ENCODE measurements at regions of chrX and their contacts with region 1.

Region 1: DNA sequence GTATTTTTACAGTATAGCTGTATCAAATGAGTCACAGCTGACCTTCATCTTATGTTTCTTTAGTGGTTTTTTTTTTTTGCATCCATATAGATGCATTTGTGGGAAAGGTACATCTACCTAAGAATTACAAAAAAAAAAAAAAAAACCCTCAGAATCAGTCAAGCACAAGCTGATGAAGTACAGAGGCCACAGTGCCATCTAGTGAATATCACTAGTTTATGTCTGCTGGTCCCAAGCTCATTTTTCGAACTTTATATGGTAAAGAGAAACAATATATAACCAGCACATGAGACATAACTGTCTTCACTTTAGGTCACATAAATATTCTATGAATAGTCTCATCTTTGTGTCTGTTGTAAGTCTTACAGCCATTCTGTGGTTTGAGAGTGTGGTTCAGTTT is 220.1 kb downstream of the DLG3 start:
- DNase-seq: no peak
- H3K4me3 ChIP-seq: no peak overlapping the region
- H3K27ac ChIP-seq: no peak overlapping the region
- H3K27me3 ChIP-seq: no peaks in the 10 kb centered on the region
- CTCF ChIP-seq: peak; percentile 44

Region 2: DNA sequence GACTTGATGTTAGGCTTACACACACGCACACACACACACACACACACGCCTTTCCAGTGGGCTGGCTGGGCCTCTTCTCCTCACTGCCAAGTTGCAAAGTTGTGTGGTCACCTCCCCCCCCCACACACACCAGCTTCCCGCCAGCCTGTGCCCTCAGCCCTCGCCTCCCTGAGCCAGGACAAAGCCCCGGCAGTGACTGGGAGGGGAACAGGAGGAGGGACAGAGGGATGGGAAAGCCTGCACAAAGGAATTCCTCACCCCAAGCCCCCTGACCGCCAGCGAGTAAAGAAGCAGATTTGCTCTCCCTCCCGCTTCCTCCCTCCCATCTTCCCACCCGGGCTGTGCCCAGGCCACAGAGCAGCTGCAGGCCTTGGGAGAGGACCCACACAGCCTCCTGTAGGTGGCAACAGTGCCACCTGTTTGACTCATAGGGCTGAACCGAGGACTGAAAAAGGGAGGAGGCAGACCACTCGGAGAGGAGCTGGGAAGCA is 241.8 kb before region 1 on chrX and contains the start of gene GDPD2:
- CTCF ChIA-PET with region 1: interaction called, 10 read pairs
- POLR2A ChIA-PET with region 1: no interaction called
- DNase-seq: no peak
- H3K4me3 ChIP-seq: no peak within 1 kb of the TSS
- H3K27ac ChIP-seq: no peak within 1 kb of the TSS
- H3K27me3 ChIP-seq: no peaks in the 10 kb centered on the region
- CTCF ChIP-seq: peak; percentile 27; the same call in 1 of the 2 replicates
- polyA plus RNA-seq, gene GDPD2: not detected in 2 replicates

Region 3: GRCh38 chrX:70454441-70455365 is 210.0 kb before region 1 on chrX:
- CTCF ChIA-PET with region 1: interaction called, 18 read pairs
- POLR2A ChIA-PET with region 1: no interaction called
- DNase-seq: no peak
- H3K4me3 ChIP-seq: peak overlapping the region; percentile 68
- H3K27ac ChIP-seq: peak overlapping the region; percentile 39
- H3K27me3 ChIP-seq: no peaks in the 10 kb centered on the region
- CTCF ChIP-seq: peak; percentile 88

Region 4: DNA sequence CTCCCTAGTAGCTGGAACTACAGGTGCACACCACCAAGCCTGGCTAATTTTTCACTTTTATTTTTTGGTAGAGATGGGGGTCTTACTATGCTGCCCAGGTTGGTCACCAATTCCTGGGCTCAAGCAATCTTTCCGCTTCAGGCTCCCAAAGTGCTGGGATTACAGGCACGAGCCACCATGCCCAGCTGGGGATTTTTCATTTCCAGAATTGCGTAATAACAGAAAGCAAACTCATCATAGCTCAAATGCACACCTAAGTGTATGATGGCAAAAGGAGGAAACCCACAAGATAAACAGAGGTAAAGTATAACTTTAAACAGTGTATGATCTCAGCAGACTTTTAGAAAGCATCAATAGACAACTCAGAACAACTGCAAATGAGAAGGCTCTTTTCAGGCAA is 187.6 kb after region 1 on chrX:
- CTCF ChIA-PET with region 1: interaction called, 13 read pairs
- POLR2A ChIA-PET with region 1: no interaction called
- DNase-seq: no peak
- H3K4me3 ChIP-seq: no peak overlapping the region
- H3K27ac ChIP-seq: no peak overlapping the region
- H3K27me3 ChIP-seq: no peaks in the 10 kb centered on the region
- CTCF ChIP-seq: no peak

Region 5: GRCh38 chrX:71283403-71284143 is 618.8 kb after region 1 on chrX and contains the start of gene NONO:
- CTCF ChIA-PET with region 1: no interaction called
- POLR2A ChIA-PET with region 1: no interaction called
- DNase-seq: peak; percentile 96
- H3K4me3 ChIP-seq: peak within 1 kb of the TSS; percentile 74
- H3K27ac ChIP-seq: peak within 1 kb of the TSS; percentile 92
- H3K27me3 ChIP-seq: no peaks in the 10 kb centered on the region
- CTCF ChIP-seq: peak; percentile 19; the same call in 1 of the 2 replicates
- polyA plus RNA-seq, gene NONO: 279 and 437 TPM in 2 replicates